Transverse colon (tissue), 4 donors: ENCODE measurements at regions of chr13 and their contacts with region 1.

Region 1: GRCh38 chr13:65656740-65657329 is 1573.3 kb downstream of the PCDH9 start:
- DNase-seq: no peak
- H3K4me3 ChIP-seq: no peak overlapping the region
- H3K27ac ChIP-seq: no peak overlapping the region
- H3K4me1 ChIP-seq: no peaks in the 10 kb centered on the region
- H3K27me3 ChIP-seq: no peaks in the 10 kb centered on the region
- CTCF ChIP-seq: peak in 2 of 5 experiments; percentile 14 to 30
- EP300 ChIP-seq: no peak
- POLR2A ChIP-seq: no peak

Region 2: GRCh38 chr13:65400697-65401096 is 256.1 kb before region 1 on chr13:
- in situ Hi-C with region 1: no loop called
- intact Hi-C with region 1: no loop called
- DNase-seq: no peak
- H3K4me3 ChIP-seq: no peak overlapping the region
- H3K27ac ChIP-seq: no peak overlapping the region
- H3K4me1 ChIP-seq: no peaks in the 10 kb centered on the region
- H3K27me3 ChIP-seq: no peaks in the 10 kb centered on the region
- CTCF ChIP-seq: no peak
- EP300 ChIP-seq: no peak
- POLR2A ChIP-seq: no peak

Region 3: DNA sequence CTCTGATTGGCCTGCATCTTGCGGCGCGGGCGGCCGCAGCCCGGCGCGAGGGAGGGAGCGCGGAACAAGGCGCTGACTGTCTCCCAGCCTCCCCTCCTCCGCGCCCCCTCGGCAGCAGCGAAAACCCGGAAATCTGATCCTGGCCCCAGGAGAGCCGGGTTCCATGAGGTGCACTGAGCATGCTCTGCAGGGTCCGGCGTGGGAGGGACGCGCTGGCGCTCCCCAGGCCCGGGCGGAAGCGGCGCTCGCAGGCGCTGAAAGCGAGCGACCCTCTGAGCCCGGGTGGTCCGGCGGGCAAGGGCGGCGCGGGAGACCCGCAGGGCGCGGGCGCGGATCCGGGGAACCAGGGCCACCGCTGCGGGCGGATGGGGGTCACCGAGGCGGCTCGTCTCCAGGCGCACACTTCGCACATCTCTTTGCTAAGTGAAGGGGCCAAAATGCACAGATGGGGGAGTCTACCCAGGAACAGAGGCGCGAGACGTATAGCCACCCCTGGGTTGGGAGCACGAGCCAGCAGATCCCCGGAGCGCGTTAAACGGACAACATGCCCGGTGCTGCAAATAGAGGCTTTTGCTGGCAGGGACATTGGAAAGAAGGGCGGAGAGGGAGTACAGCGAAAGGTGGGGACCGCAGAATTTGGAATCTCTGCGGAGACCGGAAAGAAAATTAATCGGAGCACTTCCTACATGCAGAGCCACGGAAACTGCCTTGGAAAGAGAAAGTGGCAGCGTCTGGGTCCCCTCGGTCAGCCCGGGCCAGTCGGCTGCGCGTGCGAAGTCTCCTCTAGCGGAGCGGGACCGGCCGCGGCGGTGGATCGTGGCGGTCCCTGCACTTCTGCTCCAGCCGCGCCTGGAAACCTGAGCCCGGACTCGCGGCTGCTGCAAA is 1573.8 kb after region 1 on chr13:
- in situ Hi-C with region 1: loop called in 1 of 4 experiments (anchors 25 kb)
- intact Hi-C with region 1: no loop called
- DNase-seq: peak; percentile 87
- H3K4me3 ChIP-seq: peak overlapping the region; percentile 63 to 88 (median 73)
- H3K27ac ChIP-seq: peak overlapping the region; percentile 81 to 88 (median 87)
- H3K4me1 ChIP-seq: peaks cover 0 to 17% (median 7%) of the 10 kb centered on the region in 4 donors
- H3K27me3 ChIP-seq: peaks cover 28% of the 10 kb centered on the region
- CTCF ChIP-seq: no peak
- EP300 ChIP-seq: no peak
- POLR2A ChIP-seq: no peak